ENCODE measurements at regions of chr17 and their contacts with region 1.

Region 1: GRCh38 chr17:43694077-43694870 is 32.6 kb upstream of the MEOX1 start:
- DNase-seq: peak; percentile 56 to 84 (median 64)
- H3K4me3 ChIP-seq: no peak overlapping the region
- H3K4me3 Mint-ChIP-seq: no peak overlapping the region
- H3K27ac ChIP-seq: no peak overlapping the region
- H3K27ac Mint-ChIP-seq: no peak overlapping the region
- H3K4me1 ChIP-seq: no peaks in the 10 kb centered on the region
- H3K4me1 Mint-ChIP-seq: peaks cover 0 to 5% (median 0%) of the 10 kb centered on the region in 3 donors
- H3K27me3 ChIP-seq: no peaks in the 10 kb centered on the region
- H3K27me3 Mint-ChIP-seq: peaks cover 22 to 24% of the 10 kb centered on the region in 2 donors

Region 2: DNA sequence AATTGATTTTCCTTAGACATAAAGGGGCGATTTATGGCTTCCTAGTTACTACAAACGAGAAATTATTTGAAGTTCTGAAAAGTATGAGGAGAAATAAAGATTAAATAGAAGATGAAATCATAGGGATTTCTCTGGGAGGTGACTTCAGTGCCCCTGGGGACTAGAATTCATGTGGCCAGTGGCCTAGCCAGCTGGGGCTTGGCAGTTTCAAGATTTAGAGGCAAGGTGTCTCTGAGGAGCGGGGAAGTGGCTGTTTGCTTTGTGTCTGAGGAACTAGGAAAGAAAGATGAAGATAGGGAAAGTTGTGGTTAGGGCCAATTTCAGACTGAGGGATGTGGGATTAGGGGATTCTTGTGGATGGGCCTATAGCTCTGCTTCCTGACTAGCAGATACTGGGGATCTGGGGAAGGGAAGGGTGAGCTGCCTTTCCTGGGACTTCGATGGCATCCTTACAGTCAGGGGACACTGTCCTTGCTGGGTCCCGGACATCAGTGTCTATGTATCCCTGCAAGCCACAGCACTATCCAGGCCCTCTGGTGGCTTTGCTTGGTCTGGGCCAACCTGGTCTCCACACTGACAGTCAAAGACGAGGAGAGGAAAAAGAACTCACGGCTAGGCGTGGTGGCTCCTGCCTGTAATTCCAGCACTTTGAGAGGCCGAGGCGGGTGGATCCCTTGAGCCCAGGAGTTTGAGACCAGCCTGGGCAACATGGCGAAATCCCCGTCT is 10.2 kb before region 1 on chr17:
- CTCF ChIA-PET with region 1: interaction called, 10 read pairs
- POLR2A ChIA-PET with region 1: no interaction called
- DNase-seq: no peak
- H3K4me3 ChIP-seq: no peak overlapping the region
- H3K4me3 Mint-ChIP-seq: no peak overlapping the region
- H3K27ac ChIP-seq: no peak overlapping the region
- H3K27ac Mint-ChIP-seq: no peak overlapping the region
- H3K4me1 ChIP-seq: no peaks in the 10 kb centered on the region
- H3K4me1 Mint-ChIP-seq: no peaks in the 10 kb centered on the region
- H3K27me3 ChIP-seq: no peaks in the 10 kb centered on the region
- H3K27me3 Mint-ChIP-seq: peaks cover 1 to 11% of the 10 kb centered on the region in 2 donors

Region 3: GRCh38 chr17:43760254-43760852 is 66.1 kb after region 1 on chr17:
- CTCF ChIA-PET with region 1: interaction called, 335 read pairs
- POLR2A ChIA-PET with region 1: interaction called, 3 read pairs
- DNase-seq: peak; percentile 75 to 91 (median 79)
- H3K4me3 ChIP-seq: no peak overlapping the region
- H3K4me3 Mint-ChIP-seq: no peak overlapping the region
- H3K27ac ChIP-seq: no peak overlapping the region
- H3K27ac Mint-ChIP-seq: peak overlapping the region in 1 of 8 donors; percentile 40
- H3K4me1 ChIP-seq: no peaks in the 10 kb centered on the region
- H3K4me1 Mint-ChIP-seq: peaks cover 0 to 5% (median 5%) of the 10 kb centered on the region in 3 donors
- H3K27me3 ChIP-seq: no peaks in the 10 kb centered on the region
- H3K27me3 Mint-ChIP-seq: peaks cover 15 to 39% of the 10 kb centered on the region in 2 donors